ENCODE measurements at regions of chr11 and their contacts with region 1.

Region 1: GRCh38 chr11:86138958-86139357 is 70.1 kb upstream of the PICALM start:
- DNase-seq: peak; percentile 37
- H3K4me3 Mint-ChIP-seq: peak overlapping the region; percentile 57
- H3K27ac Mint-ChIP-seq: peak overlapping the region; percentile 81
- H3K4me1 Mint-ChIP-seq: peaks cover 75% of the 10 kb centered on the region
- H3K27me3 Mint-ChIP-seq: no peaks in the 10 kb centered on the region

Region 2: DNA sequence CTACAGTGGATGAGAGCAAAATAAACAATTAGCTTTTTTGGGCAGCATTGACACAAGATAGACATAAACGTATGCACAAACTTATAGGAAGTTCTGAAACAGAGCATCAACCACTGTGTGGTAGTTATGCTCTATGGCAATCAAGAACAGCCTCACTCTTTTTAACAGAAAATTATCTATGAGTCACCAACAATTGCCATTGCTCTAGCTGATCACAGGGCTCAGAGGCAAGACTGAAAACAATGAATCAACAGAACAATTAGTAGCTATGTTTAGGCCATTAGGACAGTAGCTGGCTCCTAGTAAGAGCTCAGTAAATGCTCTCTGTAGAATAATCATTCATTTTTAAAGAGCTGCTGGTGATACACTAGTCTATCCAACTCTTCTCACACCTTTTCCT is 35.1 kb before region 1 on chr11:
- intact Hi-C with region 1: no loop called
- DNase-seq: no peak
- H3K4me3 Mint-ChIP-seq: no peak overlapping the region
- H3K27ac Mint-ChIP-seq: no peak overlapping the region
- H3K4me1 Mint-ChIP-seq: peaks cover under 1% of the 10 kb centered on the region
- H3K27me3 Mint-ChIP-seq: peaks cover 7% of the 10 kb centered on the region

Region 3: DNA sequence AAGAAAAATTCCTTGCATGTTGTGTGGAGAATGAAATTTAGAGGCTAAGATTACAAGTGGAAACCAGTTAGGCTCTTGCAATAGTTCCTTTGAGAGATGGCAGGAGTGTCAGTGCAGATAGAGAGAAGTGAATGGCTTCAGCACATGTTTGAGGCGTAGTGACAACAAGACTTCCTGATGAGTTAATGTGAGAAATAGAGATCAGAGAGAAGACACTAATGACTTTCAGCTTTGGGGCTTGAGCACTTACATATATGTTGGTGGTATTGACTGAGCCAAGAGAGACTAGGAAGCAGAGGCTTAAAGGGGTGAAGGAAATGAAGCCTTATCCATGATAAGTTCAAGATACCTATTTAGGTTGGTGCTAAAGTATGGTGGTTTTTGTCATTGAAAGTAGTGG is 14.1 kb before region 1 on chr11:
- intact Hi-C with region 1: loop called (anchors 1 kb)
- DNase-seq: no peak
- H3K4me3 Mint-ChIP-seq: peak overlapping the region; percentile 3
- H3K27ac Mint-ChIP-seq: peak overlapping the region; percentile 83
- H3K4me1 Mint-ChIP-seq: peaks cover 26% of the 10 kb centered on the region
- H3K27me3 Mint-ChIP-seq: no peaks in the 10 kb centered on the region

Region 4: GRCh38 chr11:86193297-86194095 is 54.5 kb after region 1 on chr11:
- intact Hi-C with region 1: loop called (anchors 2 kb)
- DNase-seq: peak; percentile 58
- H3K4me3 Mint-ChIP-seq: peak overlapping the region; percentile 58
- H3K27ac Mint-ChIP-seq: peak overlapping the region; percentile 54
- H3K4me1 Mint-ChIP-seq: peaks cover 43% of the 10 kb centered on the region
- H3K27me3 Mint-ChIP-seq: no peaks in the 10 kb centered on the region

Measured in activated T-helper 1 cell treated with anti-CD3 and anti-CD28 coated beads, Interleukin-12 subunit alpha, Interleukin-12 subunit beta, Interleukin-2, Interleukin-4 antibody, amounts not matched to agents 30 ng/mL and 10 ng/mL and 1 ng/mL, durations not matched to agents 14 hours and 24 hours and 36 hours (primary cell).